Sciatic nerve (tissue), 2 donors: ENCODE measurements at regions of chr20 and their contacts with region 1.

Region 1: DNA sequence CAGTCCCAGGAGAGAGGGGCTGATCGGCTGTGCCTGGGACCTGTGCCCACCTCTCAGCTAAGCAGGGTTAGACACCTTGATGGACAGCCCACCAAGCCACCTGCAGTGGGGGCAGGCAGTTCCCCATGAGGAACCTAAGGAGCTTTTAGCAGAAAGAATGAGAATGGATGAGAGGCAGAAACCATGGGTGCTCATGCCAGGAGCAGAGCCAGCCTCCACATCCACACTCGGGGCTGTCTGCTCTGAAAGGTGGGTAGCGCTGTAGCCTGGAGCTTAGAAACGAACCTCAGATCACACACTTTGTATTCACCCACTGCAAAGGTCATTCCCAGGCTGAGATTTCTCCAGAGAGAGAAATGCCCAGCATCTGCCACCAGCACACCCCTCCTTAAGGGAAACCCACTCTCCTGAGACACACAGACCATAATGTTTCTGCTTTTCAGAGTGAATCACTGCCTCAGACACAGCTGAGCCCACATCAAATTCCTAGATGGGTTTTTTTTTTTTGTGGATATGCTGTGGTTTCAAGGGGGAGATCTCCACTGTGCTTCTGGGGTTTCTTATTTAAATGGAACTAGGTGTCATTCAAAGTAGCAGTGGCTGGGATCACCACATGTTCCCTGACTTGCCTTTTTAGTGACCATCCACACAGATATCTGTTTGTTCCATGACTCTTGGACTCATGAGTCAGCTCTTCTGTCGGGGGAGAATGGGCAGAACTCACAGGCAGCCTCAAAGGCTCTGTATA is 218.9 kb downstream of the EYA2 start:
- DNase-seq: peak; percentile 25
- ATAC-seq: no peak

Region 2: GRCh38 chr20:48574393-48574792 is 1460.9 kb after region 1 on chr20:
- intact Hi-C with region 1: loop called (anchors 5 kb)
- DNase-seq: no peak
- ATAC-seq: no peak